ENCODE measurements at regions of chr14 and their contacts with region 1.

Region 1: GRCh38 chr14:100096570-100096971 is 31.3 kb downstream of the EVL start:
- DNase-seq: no peak

Region 2: GRCh38 chr14:100108042-100108825 is 11.7 kb after region 1 on chr14:
- CTCF ChIA-PET with region 1: interaction called, 10 read pairs
- POLR2A ChIA-PET with region 1: no interaction called
- DNase-seq: peak; percentile 88